Sigmoid colon (tissue), 7 donors: ENCODE measurements at regions of chr4 and their contacts with region 1.

Region 1: GRCh38 chr4:176270669-176271068 is 1.6 kb upstream of the ASB5 start:
- DNase-seq: peak; percentile 78
- H3K4me3 ChIP-seq: no peak overlapping the region
- H3K27ac ChIP-seq: peak overlapping the region; percentile 64 to 83 (median 72)
- H3K4me1 ChIP-seq: peaks cover 0 to 20% (median 15%) of the 10 kb centered on the region in 4 donors
- H3K27me3 ChIP-seq: no peaks in the 10 kb centered on the region
- CTCF ChIP-seq: no peak
- EP300 ChIP-seq: peak in 2 of 4 donors; percentile 25 to 67
- POLR2A ChIP-seq: no peak

Region 2: GRCh38 chr4:176238157-176238610 is 32.5 kb before region 1 on chr4:
- intact Hi-C with region 1: loop called (anchors 5 kb)
- DNase-seq: no peak
- H3K4me3 ChIP-seq: peak overlapping the region in 1 of 4 donors; percentile 9
- H3K27ac ChIP-seq: peak overlapping the region; percentile 83 to 90 (median 86)
- H3K4me1 ChIP-seq: peaks cover 0 to 65% (median 34%) of the 10 kb centered on the region in 4 donors
- H3K27me3 ChIP-seq: no peaks in the 10 kb centered on the region
- CTCF ChIP-seq: no peak
- EP300 ChIP-seq: peak; percentile 98 to 99 (median 98)
- POLR2A ChIP-seq: no peak

Region 3: DNA sequence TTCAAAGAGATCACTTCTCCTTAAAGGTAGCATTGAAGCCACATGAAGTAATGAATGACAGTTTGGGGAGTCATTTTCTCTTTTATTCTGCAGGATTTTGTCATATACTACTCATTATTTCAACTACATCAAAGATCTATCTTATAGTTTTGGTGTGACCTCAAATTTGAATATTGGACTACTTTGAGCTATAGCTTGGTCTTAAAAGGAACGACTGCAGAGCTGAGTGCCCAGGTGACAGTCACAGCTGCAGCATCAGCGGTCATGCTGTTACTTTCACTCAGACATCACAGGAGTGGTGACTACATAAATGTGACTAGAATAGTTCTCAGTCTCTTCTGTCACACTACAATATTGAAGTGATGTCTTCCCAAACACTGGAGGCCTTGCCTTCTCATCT is 38.4 kb after region 1 on chr4:
- intact Hi-C with region 1: no loop called
- DNase-seq: no peak
- H3K4me3 ChIP-seq: no peak overlapping the region
- H3K27ac ChIP-seq: no peak overlapping the region
- H3K4me1 ChIP-seq: peaks cover 0 to 15% (median 8%) of the 10 kb centered on the region in 4 donors
- H3K27me3 ChIP-seq: no peaks in the 10 kb centered on the region
- CTCF ChIP-seq: no peak
- EP300 ChIP-seq: no peak
- POLR2A ChIP-seq: no peak